MCF 10A (cell line): ENCODE measurements at regions of chr16 and their contacts with region 1.

Region 1: GRCh38 chr16:83952940-83953795 is at the start of gene OSGIN1:
- DNase-seq: peak; percentile 97
- H3K4me3 Mint-ChIP-seq: peak within 1 kb of the TSS; percentile 77
- H3K27ac Mint-ChIP-seq: peak within 1 kb of the TSS; percentile 70
- H3K4me1 Mint-ChIP-seq: peaks cover 8% of the 10 kb centered on the region
- H3K27me3 Mint-ChIP-seq: no peaks in the 10 kb centered on the region
- CTCF ChIP-seq: no peak
- total RNA-seq, gene OSGIN1: 3.7 and 6.3 TPM in 2 replicates

Region 2: GRCh38 chr16:83826146-83826913 is 126.8 kb before region 1 on chr16:
- CTCF ChIA-PET with region 1: interaction called, 9 read pairs
- POLR2A ChIA-PET with region 1: interaction called, 3 read pairs
- intact Hi-C with region 1: loop called (anchors 1 kb)
- DNase-seq: peak; percentile 84
- H3K4me3 Mint-ChIP-seq: no peak overlapping the region
- H3K27ac Mint-ChIP-seq: no peak overlapping the region
- H3K4me1 Mint-ChIP-seq: peaks cover 8% of the 10 kb centered on the region
- H3K27me3 Mint-ChIP-seq: no peaks in the 10 kb centered on the region
- CTCF ChIP-seq: peak; percentile 87

Region 3: DNA sequence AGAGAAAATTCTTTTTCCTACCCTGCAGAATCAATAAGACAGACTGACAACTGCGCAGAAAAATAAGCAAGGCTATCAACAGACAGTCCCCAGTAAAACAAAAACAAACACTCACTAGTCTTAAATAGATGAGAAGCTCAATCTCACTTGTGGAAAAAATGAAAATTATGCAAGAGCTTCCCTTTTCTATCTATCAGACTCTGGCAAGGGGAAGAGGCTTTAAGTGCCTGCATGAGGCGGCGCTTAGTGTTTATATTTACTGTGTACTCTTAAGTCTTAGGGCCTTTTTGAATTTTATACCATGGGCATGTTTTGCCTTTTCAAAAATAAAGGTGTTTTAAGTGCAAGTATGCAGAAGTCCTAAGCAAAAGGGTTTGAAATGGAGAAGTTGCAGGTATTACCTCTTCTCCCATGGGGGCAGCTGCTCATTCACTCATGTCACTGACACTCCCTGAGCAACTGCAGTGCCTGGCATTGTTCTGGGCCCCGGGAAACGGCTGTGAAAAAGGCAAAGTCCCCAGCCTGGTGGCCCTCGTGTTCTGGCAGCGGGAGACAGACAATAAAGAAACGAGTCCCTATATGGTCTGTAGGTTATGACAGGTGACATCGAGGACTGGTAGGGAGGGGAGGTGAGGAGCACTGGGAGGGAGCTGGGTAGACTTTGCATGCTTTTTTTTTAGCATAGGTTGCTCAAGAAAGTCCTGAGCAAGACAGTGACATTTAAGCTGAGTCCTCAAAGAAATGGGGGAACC is 110.2 kb before region 1 on chr16:
- CTCF ChIA-PET with region 1: no interaction called
- POLR2A ChIA-PET with region 1: no interaction called
- intact Hi-C with region 1: no loop called
- DNase-seq: no peak
- H3K4me3 Mint-ChIP-seq: no peak overlapping the region
- H3K27ac Mint-ChIP-seq: no peak overlapping the region
- H3K4me1 Mint-ChIP-seq: peaks cover 14% of the 10 kb centered on the region
- H3K27me3 Mint-ChIP-seq: peaks cover 7% of the 10 kb centered on the region
- CTCF ChIP-seq: no peak

Region 4: GRCh38 chr16:83967806-83968305 is 14.7 kb after region 1 on chr16 and contains the start of gene NECAB2:
- CTCF ChIA-PET with region 1: interaction called, 12 read pairs
- POLR2A ChIA-PET with region 1: no interaction called
- intact Hi-C with region 1: no loop called
- DNase-seq: peak; percentile 23
- H3K4me3 Mint-ChIP-seq: peak within 1 kb of the TSS; percentile 69
- H3K27ac Mint-ChIP-seq: no peak within 1 kb of the TSS
- H3K4me1 Mint-ChIP-seq: peaks cover 6% of the 10 kb centered on the region
- H3K27me3 Mint-ChIP-seq: peaks cover 10% of the 10 kb centered on the region
- CTCF ChIP-seq: peak; percentile 86
- total RNA-seq, gene NECAB2: 2.3 and 3.6 TPM in 2 replicates

Region 5: DNA sequence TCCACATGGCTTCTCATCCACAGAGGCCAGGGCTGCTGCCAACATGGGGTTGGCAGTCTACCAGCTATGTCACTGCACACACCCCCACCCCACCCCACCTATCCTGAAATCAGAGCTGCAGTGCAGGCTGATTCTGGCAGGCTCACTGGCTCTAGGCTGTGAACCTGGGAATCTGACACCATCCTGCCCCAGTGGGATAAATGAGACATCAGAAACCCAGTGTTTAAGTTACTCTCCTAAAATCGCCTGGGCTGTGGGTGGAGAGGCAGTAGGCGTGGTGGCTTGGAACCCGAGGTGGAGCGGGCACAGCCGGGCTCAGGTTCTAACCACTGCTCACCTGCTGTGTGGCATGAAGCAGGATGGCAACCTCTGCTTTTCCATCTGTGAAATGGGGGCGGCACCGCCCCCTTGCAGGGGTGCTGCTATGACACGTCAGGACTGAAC is 83.8 kb after region 1 on chr16:
- CTCF ChIA-PET with region 1: interaction called, 52 read pairs
- POLR2A ChIA-PET with region 1: no interaction called
- intact Hi-C with region 1: no loop called
- DNase-seq: peak; percentile 44
- H3K4me3 Mint-ChIP-seq: no peak overlapping the region
- H3K27ac Mint-ChIP-seq: no peak overlapping the region
- H3K4me1 Mint-ChIP-seq: peaks cover 7% of the 10 kb centered on the region
- H3K27me3 Mint-ChIP-seq: peaks cover 30% of the 10 kb centered on the region
- CTCF ChIP-seq: no peak

Region 6: DNA sequence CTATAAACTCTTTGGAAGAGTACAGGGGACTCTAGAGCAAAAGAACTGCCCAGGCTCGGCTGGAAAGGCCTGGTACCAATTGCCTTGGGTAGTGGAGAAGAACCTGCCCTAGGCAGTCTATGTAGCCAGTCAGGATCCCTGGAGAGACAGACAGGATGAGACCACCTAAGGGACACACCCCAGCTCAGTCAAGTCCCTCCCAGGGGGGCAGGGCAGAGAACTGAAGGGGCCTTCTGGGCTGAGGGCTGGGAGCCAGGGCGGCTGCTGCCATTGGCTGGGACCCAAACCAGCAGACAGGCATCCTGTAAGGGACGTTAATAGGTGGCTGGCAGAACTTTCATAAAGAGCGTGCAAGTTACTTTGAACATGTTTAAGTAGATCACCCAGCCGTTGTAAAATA is 102.2 kb after region 1 on chr16:
- CTCF ChIA-PET with region 1: interaction called, 20 read pairs
- POLR2A ChIA-PET with region 1: interaction called, 4 read pairs
- intact Hi-C with region 1: no loop called
- DNase-seq: no peak
- H3K4me3 Mint-ChIP-seq: no peak overlapping the region
- H3K27ac Mint-ChIP-seq: no peak overlapping the region
- H3K4me1 Mint-ChIP-seq: no peaks in the 10 kb centered on the region
- H3K27me3 Mint-ChIP-seq: no peaks in the 10 kb centered on the region
- CTCF ChIP-seq: no peak

Region 7: GRCh38 chr16:84116720-84117493 is 163.7 kb after region 1 on chr16 and contains the start of gene MBTPS1:
- CTCF ChIA-PET with region 1: no interaction called
- POLR2A ChIA-PET with region 1: interaction called, 16 read pairs
- intact Hi-C with region 1: no loop called
- DNase-seq: peak; percentile 98
- H3K4me3 Mint-ChIP-seq: peak within 1 kb of the TSS; percentile 89
- H3K27ac Mint-ChIP-seq: peak within 1 kb of the TSS; percentile 90
- H3K4me1 Mint-ChIP-seq: no peaks in the 10 kb centered on the region
- H3K27me3 Mint-ChIP-seq: no peaks in the 10 kb centered on the region
- CTCF ChIP-seq: no peak
- total RNA-seq, gene MBTPS1: 63.6 and 75.1 TPM in 2 replicates

Region 8: DNA sequence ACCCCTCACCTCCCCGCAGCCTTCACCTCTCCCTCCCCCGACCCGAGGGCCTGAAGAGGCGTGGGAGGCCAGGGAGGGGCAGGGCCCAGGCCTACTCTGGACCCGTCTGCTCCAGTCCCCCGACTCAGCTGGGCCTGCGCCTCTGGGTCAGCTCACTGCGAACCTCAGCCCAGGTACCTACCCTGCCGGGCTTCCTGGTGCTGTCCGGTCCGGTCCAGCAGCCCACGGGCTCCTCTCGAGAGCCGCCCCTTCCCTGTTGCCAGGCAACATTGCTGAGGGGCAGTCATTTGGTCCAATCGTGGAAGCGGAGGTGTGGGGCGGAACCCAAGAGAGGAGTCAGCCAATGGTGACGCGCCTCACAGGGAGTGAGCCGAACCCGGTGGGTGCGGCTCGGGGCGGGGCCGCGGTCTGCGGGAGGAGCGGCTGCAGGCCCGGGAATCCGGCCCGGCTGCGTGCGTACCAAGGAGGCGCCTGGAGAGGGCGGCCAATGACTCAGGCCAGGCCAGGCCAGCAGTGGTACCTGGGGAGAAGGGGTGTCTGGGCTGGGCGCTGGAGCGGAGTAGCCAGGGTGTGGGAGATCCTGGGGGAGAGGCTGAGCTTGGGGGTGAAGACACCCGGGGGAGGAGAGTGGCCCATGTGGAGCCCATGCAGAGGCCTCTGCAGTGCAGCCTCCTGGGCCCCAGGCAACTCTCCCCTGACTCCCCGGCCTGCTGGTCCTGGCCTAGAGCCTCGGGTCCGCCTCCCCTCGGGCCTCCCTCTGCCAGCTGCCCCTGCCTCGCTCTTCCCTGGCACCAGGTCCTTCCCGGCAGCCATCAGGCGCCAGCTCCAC is 551.5 kb after region 1 on chr16 and contains the start of gene MEAK7:
- CTCF ChIA-PET with region 1: no interaction called
- POLR2A ChIA-PET with region 1: no interaction called
- intact Hi-C with region 1: loop called (anchors 5 kb)
- DNase-seq: peak; percentile 99
- H3K4me3 Mint-ChIP-seq: peak within 1 kb of the TSS; percentile 84
- H3K27ac Mint-ChIP-seq: peak within 1 kb of the TSS; percentile 88
- H3K4me1 Mint-ChIP-seq: peaks cover 52% of the 10 kb centered on the region
- H3K27me3 Mint-ChIP-seq: no peaks in the 10 kb centered on the region
- CTCF ChIP-seq: no peak
- total RNA-seq, gene MEAK7: 62.3 and 66.8 TPM in 2 replicates